Prostate gland (tissue), 2 donors: ENCODE measurements at regions of chr2 and their contacts with region 1.

Region 1: GRCh38 chr2:85066874-85067351 is 66.3 kb upstream of the TCF7L1 start:
- DNase-seq: peak; percentile 68
- H3K4me3 ChIP-seq: no peak overlapping the region
- H3K27ac ChIP-seq: no peak overlapping the region
- H3K4me1 ChIP-seq: no peaks in the 10 kb centered on the region
- H3K27me3 ChIP-seq: no peaks in the 10 kb centered on the region
- CTCF ChIP-seq: peak in 3 of 4 experiments; percentile 60 to 76 (median 72)
- POLR2A ChIP-seq: no peak

Region 2: GRCh38 chr2:85288244-85288725 is 221.4 kb after region 1 on chr2:
- intact Hi-C with region 1: loop called (anchors 5 kb)
- DNase-seq: no peak
- H3K4me3 ChIP-seq: no peak overlapping the region
- H3K27ac ChIP-seq: no peak overlapping the region
- H3K4me1 ChIP-seq: no peaks in the 10 kb centered on the region
- H3K27me3 ChIP-seq: no peaks in the 10 kb centered on the region
- CTCF ChIP-seq: no peak
- POLR2A ChIP-seq: no peak